Calu3 (cell line): ENCODE measurements at regions of chr12 and their contacts with region 1.

Region 1: GRCh38 chr12:88247241-88247643 is 105.1 kb downstream of the TMTC3 start:
- DNase-seq: no peak
- H3K4me3 Mint-ChIP-seq: no peak overlapping the region
- H3K27ac Mint-ChIP-seq: no peak overlapping the region
- H3K4me1 Mint-ChIP-seq: peaks cover 22% of the 10 kb centered on the region
- H3K27me3 Mint-ChIP-seq: peaks cover 37% of the 10 kb centered on the region
- CTCF ChIP-seq: no peak

Region 2: DNA sequence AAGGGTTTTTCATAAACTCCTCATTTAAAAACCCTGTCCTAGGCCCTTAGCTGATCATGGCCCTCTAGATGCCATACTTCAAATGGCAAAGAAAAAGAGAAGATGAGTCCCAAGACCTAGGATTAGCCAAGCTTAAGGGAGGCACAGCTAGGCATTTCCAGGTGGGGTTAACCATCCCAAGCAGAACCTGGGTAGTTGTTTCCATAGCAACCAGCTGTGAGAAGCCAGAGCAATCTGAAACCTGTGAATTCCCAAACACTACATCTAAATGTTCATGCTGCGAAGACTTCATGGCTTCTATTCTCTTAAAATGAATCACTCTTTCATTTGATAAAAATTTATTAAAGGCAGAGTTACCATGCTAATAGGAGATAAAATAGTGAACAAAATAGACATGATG is 590.9 kb before region 1 on chr12:
- CTCF ChIA-PET with region 1: no interaction called
- intact Hi-C with region 1: no loop called
- DNase-seq: no peak
- H3K4me3 Mint-ChIP-seq: no peak overlapping the region
- H3K27ac Mint-ChIP-seq: no peak overlapping the region
- H3K4me1 Mint-ChIP-seq: peaks cover 5% of the 10 kb centered on the region
- H3K27me3 Mint-ChIP-seq: no peaks in the 10 kb centered on the region
- CTCF ChIP-seq: no peak

Region 3: GRCh38 chr12:88113871-88114270 is 133.4 kb before region 1 on chr12:
- CTCF ChIA-PET with region 1: no interaction called
- intact Hi-C with region 1: no loop called
- DNase-seq: no peak
- H3K4me3 Mint-ChIP-seq: no peak overlapping the region
- H3K27ac Mint-ChIP-seq: no peak overlapping the region
- H3K4me1 Mint-ChIP-seq: no peaks in the 10 kb centered on the region
- H3K27me3 Mint-ChIP-seq: no peaks in the 10 kb centered on the region
- CTCF ChIP-seq: no peak

Region 4: DNA sequence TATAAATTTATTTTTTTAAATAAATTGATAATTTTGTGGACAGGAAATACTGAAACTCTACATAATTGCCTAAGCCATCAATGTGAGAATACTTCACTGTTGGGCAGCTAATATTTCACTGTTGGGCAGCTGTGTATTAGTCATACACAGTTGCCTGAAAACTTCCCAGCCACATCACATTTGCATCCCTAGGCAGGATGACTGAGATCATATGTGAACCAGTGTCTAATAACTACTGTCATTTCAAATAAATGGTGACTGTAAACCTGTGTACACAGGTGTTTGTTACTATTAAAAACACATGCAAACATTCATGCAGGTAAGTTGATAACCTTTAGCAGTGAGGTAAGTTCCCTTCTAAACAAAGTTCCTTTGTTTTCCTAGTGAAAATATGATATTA is 61.2 kb before region 1 on chr12:
- CTCF ChIA-PET with region 1: no interaction called
- intact Hi-C with region 1: loop called (anchors 5 kb)
- DNase-seq: peak; percentile 21
- H3K4me3 Mint-ChIP-seq: no peak overlapping the region
- H3K27ac Mint-ChIP-seq: no peak overlapping the region
- H3K4me1 Mint-ChIP-seq: peaks cover 17% of the 10 kb centered on the region
- H3K27me3 Mint-ChIP-seq: no peaks in the 10 kb centered on the region
- CTCF ChIP-seq: no peak

Region 5: GRCh38 chr12:88299567-88300101 is 52.4 kb after region 1 on chr12:
- CTCF ChIA-PET with region 1: no interaction called
- intact Hi-C with region 1: loop called (anchors 2 kb)
- DNase-seq: peak; percentile 58
- H3K4me3 Mint-ChIP-seq: peak overlapping the region; percentile 50
- H3K27ac Mint-ChIP-seq: peak overlapping the region; percentile 82
- H3K4me1 Mint-ChIP-seq: peaks cover 36% of the 10 kb centered on the region
- H3K27me3 Mint-ChIP-seq: no peaks in the 10 kb centered on the region
- CTCF ChIP-seq: no peak